Right ventricle myocardium inferior (tissue), 1 donor: ENCODE measurements at regions of chr17 and their contacts with region 1.

Region 1: GRCh38 chr17:7897773-7898172 is 9.2 kb downstream of the CHD3 start:
- DNase-seq: no peak
- ATAC-seq: peak; percentile 63

Region 2: DNA sequence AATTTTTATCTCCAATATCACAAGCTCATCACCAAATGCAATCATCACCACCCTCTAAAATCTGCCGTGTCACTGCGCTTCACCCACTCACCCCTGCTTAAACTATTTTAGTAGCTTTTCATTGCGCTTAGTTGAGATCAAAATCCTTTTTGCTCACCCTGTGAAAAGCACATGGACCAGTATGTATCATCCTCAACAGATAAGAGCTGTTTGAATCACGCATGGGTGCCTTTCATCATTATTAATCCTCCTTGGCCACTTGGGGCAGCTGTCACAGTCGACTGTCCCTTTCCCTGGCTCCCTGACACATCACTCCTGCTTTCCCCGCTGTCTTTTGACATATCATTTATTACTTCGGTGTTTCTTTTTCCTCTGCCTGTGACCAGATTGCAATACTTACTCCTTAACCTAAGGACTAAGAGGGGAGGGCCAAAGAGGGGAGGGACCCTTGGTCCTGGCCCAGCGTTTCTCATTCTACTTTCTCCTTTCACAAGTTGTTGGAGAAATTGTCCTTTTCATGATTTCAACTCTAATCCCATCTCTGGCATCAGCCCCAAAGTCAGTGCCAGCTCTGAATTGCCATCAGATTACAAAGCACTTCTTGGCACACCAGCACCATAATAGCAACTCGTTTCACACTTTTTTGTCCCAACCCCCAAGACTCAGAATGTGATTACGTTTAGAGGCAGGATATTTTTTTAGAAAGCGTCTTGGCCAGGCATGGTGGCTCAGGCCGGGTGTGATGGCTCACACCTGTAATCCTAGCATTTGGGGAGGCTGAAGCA is 72.4 kb before region 1 on chr17:
- intact Hi-C with region 1: loop called (anchors 10 kb)
- DNase-seq: no peak
- ATAC-seq: no peak

Region 3: DNA sequence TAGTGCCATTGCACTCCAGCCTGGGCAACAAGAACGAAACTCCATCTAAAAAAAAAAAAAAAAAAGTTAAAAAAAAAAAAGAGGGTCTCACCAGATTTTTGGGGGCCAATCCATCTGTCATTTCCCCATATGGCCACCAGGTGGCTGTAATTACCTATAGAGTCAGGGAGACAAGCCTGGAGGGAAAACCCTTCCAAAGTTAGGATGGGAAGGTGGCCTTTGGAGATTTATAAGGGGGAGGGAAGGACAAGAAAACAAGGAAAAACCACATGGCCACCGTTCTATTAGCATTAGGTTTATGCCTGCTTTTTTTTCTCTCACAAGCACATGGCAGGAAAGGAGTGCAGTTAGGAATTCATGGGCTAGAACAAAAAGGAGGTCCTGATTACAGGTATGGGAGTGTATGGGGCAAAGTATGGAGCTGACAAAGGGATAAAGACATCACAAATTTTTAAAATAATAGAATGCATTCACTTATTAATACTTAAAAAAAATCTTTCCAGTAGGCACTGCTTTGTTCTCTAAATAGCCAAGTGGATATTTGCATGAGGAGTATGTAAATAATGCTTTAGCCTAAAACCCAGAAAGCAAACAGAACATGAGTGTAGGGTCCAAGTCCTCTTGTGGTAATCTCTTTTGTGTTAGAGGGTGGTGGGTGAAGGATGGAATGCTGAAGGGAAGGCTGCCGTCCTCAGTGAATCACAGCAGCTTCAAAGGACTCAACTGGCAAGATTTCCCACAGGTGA is 34.9 kb before region 1 on chr17:
- intact Hi-C with region 1: loop called (anchors 1 kb)
- DNase-seq: no peak
- ATAC-seq: no peak

Region 4: DNA sequence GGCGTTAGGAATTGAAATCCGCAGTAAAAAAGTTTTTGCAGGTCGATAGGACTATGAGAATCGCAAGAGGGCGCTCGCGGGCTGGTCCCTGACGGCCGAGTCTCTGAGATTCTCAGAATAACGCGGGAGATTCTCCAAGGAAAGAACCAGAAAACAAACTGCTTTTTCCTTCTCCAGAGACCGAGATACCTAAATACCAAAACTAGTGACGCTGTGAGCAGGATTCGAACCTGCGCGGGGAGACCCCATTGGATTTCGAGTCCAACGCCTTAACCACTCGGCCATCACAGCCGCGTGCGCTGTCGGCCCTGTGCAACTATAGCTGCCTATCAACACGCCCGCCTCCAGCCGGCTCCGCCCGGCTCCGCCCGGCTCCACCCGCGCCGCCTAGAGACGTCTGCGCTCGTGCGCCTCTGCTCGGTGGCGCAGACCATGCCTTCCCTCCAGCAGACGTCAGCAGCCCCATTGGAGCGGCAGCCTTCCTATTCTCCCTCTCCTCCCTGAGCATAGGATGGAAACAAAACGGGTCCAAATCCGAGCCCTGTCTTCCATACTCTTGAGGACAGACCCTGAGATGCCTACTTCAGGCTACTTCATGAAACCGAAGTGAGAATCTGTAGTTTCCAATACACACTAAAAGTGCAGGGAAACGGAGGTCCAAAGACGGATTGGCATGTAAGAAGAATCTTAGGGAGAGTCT is 241.0 kb after region 1 on chr17:
- intact Hi-C with region 1: no loop called
- DNase-seq: peak; percentile 96
- ATAC-seq: peak; percentile 92